CD4-positive, alpha-beta T cell (primary cell): ENCODE measurements at regions of chr19 and their contacts with region 1.

Region 1: DNA sequence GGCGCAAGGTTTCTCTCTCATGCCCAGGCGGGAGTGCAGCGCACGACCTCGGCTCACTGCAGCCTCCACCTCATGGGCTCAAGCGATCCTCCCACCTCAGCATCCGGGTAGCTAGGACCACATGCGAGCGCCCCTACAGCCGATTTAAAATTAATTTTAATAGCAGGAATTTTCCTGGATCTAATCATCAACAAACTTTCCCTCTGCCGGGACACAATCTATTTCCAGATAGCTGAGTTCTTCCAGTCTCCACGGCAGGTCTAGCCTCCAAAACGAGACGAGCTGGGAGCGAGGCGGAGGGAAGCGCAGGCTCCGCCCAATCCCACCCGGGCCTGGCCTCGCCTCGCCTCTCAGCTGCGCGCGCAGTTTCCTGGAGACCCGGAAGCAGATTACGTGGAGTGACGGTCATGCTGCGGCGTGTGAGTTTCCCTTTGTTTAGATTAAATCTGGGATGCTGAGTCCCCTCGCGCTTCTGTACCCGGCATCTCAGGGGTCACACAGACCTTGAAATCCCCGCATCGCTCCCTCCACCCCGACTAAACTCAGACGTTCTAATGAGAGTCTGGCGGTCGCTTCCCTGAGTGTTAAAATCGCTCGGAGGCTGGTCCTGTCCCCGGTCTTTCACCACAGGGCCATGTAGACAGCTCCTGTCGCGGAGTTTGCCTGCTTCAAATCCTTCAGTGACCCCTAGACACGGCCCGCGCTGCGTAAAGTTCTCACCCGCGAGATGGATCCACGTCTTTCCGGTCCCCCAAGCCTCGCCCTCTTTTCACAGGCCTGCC is at the start of gene ZNF880:
- DNase-seq: peak; percentile 80 to 93 (median 88)
- ATAC-seq: peak; percentile 95
- H3K4me3 ChIP-seq: peak within 1 kb of the TSS; percentile 84
- H3K4me3 Mint-ChIP-seq: peak within 1 kb of the TSS; percentile 92
- H3K27ac ChIP-seq: peak within 1 kb of the TSS; percentile 97
- H3K27ac Mint-ChIP-seq: peak within 1 kb of the TSS; percentile 97
- H3K4me1 ChIP-seq: peaks cover 15% of the 10 kb centered on the region
- H3K4me1 Mint-ChIP-seq: peaks cover 21% of the 10 kb centered on the region
- H3K27me3 ChIP-seq: no peaks in the 10 kb centered on the region
- H3K27me3 Mint-ChIP-seq: no peaks in the 10 kb centered on the region
- CTCF ChIP-seq: no peak
- total RNA-seq, gene ZNF880: 27.6 to 33.8 TPM

Region 2: DNA sequence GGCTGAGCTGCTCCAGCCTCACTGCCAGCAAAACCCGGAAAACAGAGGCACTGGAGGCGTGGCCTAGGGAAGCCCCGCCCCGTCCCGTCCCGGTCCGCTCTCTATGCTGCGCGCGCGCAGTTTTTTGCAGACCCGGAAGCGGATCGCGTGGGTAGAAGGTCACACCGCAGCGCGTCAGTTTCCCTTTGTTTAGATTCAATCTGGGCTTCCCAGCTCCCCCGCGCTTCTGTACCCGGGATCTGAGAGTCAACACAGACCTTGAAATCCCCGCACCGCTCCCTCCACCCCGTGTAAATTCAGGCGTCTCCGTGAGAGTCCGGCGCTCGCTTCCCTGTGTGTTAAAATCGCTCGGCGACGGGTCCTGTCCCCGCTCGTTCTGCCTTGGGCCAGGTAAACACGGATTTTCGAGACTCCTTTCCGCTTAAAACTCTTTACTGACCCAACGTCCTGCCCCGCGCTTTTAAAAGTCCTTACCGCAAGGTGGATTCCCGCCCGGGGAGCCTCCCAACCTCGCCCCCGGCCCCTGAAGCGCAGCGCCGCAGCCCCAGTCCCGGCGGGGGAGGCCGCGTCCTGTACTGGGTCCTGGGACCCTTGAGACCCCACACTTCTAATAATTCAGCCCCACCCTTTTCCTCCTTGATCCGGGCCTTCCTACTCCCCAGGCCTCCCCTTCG is 33.5 kb before region 1 on chr19 and contains the start of gene ZNF610:
- CTCF ChIA-PET with region 1: no interaction called
- POLR2A ChIA-PET with region 1: interaction called, 8 read pairs
- intact Hi-C with region 1: loop called in 1 of 2 experiments (anchors 5 kb)
- DNase-seq: peak; percentile 75 to 91 (median 84)
- ATAC-seq: peak; percentile 98
- H3K4me3 ChIP-seq: peak within 1 kb of the TSS; percentile 84
- H3K4me3 Mint-ChIP-seq: peak within 1 kb of the TSS; percentile 94
- H3K27ac ChIP-seq: peak within 1 kb of the TSS; percentile 69 to 79
- H3K27ac Mint-ChIP-seq: peak within 1 kb of the TSS; percentile 94
- H3K4me1 ChIP-seq: peaks cover 13% of the 10 kb centered on the region
- H3K4me1 Mint-ChIP-seq: peaks cover 17% of the 10 kb centered on the region
- H3K27me3 ChIP-seq: no peaks in the 10 kb centered on the region
- H3K27me3 Mint-ChIP-seq: no peaks in the 10 kb centered on the region
- CTCF ChIP-seq: no peak
- total RNA-seq, gene ZNF610: 0.52 to 0.53 TPM

Region 3: DNA sequence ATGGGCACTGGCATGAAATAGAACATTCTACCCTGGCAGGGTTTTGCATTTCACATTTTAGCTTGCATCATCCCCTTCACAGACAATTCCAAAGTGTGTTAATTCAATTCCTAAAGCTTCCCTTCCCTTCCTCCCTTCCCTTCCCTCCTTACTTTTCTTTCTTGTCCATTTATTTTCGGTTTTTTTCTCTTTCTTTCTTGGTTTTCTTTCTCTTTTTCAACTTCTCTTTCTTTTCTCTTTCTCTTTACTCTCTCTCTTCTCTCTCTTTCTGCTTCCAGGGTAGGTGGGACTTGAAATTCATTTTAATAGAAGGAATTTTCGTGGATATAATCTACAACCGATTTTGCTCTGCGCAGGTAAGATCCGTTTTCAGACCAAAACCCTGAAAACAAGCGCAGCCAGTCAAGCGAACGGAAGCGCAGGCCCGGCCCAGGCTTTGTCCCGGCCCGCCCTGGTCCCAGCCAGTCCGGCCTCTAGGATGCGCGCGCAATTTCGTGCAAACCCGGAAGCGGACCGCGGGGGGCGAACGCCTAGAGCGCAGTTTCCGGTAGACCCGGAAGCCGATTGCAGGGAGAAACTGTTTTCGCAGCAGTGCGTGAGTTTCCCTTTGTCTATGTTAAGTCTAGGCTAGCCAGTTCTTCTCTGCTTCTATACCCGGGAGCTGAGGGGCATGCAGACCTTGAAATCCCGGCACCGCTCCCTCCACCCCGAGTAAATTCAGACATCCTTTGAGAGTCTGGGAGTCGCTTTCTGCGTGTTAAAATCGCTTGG is 27.7 kb after region 1 on chr19 and contains the start of gene ZNF528:
- CTCF ChIA-PET with region 1: no interaction called
- POLR2A ChIA-PET with region 1: interaction called, 18 read pairs
- intact Hi-C with region 1: loop called in 1 of 2 experiments (anchors 2 kb)
- DNase-seq: peak; percentile 84 to 95 (median 92)
- ATAC-seq: peak; percentile 97
- H3K4me3 ChIP-seq: peak within 1 kb of the TSS; percentile 71
- H3K4me3 Mint-ChIP-seq: peak within 1 kb of the TSS; percentile 93
- H3K27ac ChIP-seq: peak within 1 kb of the TSS; percentile 25 to 62
- H3K27ac Mint-ChIP-seq: peak within 1 kb of the TSS; percentile 93
- H3K4me1 ChIP-seq: peaks cover 20% of the 10 kb centered on the region
- H3K4me1 Mint-ChIP-seq: peaks cover 20% of the 10 kb centered on the region
- H3K27me3 ChIP-seq: no peaks in the 10 kb centered on the region
- H3K27me3 Mint-ChIP-seq: no peaks in the 10 kb centered on the region
- CTCF ChIP-seq: no peak
- total RNA-seq, gene ZNF528: 16.3 to 16.9 TPM

Region 4: DNA sequence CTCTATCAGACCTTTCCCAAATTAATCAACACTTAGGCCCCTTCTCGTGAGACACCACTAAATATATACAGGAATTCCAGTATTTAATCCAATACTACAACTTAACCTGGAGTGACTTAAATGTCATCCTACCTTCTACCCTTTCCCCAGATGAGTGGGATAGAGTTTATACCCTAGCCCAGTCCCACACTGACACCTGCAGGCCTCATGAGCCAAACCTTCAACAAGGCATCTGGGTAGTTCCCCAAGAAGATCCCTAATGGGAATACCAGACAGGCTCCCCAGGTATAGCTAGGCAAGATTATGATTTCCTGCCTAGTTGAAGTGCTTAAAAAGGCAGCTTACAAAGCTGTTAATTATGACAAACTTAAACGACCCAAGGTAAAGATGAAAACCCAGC is 252.5 kb after region 1 on chr19:
- CTCF ChIA-PET with region 1: no interaction called
- POLR2A ChIA-PET with region 1: no interaction called
- intact Hi-C with region 1: no loop called
- DNase-seq: no peak
- ATAC-seq: no peak
- H3K4me3 ChIP-seq: no peak overlapping the region
- H3K4me3 Mint-ChIP-seq: no peak overlapping the region
- H3K27ac ChIP-seq: no peak overlapping the region
- H3K27ac Mint-ChIP-seq: no peak overlapping the region
- H3K4me1 ChIP-seq: no peaks in the 10 kb centered on the region
- H3K4me1 Mint-ChIP-seq: peaks cover 18% of the 10 kb centered on the region
- H3K27me3 ChIP-seq: no peaks in the 10 kb centered on the region
- H3K27me3 Mint-ChIP-seq: no peaks in the 10 kb centered on the region
- CTCF ChIP-seq: no peak